Vagina (tissue), 2 donors: ENCODE measurements at regions of chr2 and their contacts with region 1.

Region 1: DNA sequence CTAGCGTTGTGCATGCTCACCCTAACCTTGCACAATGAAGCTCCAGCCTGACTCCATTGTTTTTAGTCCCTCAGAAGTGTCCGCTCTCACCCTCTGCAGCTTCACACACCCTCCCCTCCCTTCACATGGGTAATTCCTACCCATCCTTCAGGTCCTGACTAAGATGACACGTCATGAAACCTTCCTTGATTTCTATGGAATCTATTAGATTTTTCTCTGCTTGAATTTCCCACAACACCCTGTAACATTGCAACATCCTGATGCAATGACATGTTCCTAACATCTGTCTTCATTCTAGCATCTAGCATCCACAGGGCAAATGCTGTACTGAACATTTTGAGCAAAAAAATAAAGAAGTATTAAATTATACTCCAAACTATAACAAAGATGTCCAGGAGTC is 77.0 kb upstream of the PID1 start:
- DNase-seq: no peak
- H3K4me3 ChIP-seq: no peak overlapping the region
- H3K27ac ChIP-seq: no peak overlapping the region
- H3K4me1 ChIP-seq: peaks cover 17% of the 10 kb centered on the region
- H3K27me3 ChIP-seq: no peaks in the 10 kb centered on the region
- CTCF ChIP-seq: no peak
- POLR2A ChIP-seq: no peak

Region 2: DNA sequence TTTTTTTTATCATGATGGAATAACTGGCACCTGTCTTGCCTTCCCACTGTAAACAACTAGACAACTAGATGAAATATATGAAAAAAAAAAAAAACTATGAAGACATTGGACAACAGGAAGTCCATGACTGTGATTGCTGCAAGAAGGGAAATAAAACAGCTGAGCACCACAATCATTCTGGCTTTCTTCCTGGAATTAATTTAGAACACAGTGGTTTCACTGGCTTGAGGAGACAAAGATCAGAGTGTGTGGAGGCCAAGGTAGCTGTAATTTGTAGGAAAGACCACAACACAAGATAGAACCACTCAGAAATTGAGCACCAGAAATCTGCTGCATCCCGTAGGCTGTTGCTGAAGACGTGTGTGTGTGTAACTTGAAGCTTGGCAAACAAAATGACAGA is 44.1 kb after region 1 on chr2:
- intact Hi-C with region 1: loop called (anchors 1 kb)
- DNase-seq: no peak
- H3K4me3 ChIP-seq: no peak overlapping the region
- H3K27ac ChIP-seq: peak overlapping the region; percentile 38
- H3K4me1 ChIP-seq: no peaks in the 10 kb centered on the region
- H3K27me3 ChIP-seq: no peaks in the 10 kb centered on the region
- CTCF ChIP-seq: no peak
- POLR2A ChIP-seq: no peak

Region 3: DNA sequence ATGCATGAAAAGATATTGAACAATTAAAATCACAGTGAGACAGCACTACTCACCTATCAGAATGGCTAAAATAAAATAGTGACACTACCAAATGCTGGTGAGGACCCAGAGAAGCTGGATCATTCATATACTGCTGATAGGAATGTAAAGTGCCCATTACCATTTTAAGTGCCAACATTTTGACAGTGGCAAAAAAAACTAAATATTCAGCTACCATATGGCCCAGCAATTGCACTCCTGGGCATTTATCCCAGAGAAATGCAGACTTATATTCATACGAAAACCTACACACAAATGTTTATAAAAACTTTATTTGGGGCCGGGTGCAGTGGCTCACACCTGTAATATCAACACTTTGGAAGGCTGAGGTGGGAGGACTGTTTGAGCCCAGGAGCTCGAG is 621.8 kb after region 1 on chr2:
- intact Hi-C with region 1: loop called (anchors 5 kb)
- DNase-seq: no peak
- H3K4me3 ChIP-seq: no peak overlapping the region
- H3K27ac ChIP-seq: no peak overlapping the region
- H3K4me1 ChIP-seq: peaks cover 12% of the 10 kb centered on the region
- H3K27me3 ChIP-seq: no peaks in the 10 kb centered on the region
- CTCF ChIP-seq: no peak
- POLR2A ChIP-seq: no peak